ENCODE measurements at regions of chr2 and their contacts with region 1.

Region 1: GRCh38 chr2:113602869-113603466 is 24.1 kb upstream of the RABL2A start:
- DNase-seq: no peak
- CTCF ChIP-seq: no peak

Region 2: DNA sequence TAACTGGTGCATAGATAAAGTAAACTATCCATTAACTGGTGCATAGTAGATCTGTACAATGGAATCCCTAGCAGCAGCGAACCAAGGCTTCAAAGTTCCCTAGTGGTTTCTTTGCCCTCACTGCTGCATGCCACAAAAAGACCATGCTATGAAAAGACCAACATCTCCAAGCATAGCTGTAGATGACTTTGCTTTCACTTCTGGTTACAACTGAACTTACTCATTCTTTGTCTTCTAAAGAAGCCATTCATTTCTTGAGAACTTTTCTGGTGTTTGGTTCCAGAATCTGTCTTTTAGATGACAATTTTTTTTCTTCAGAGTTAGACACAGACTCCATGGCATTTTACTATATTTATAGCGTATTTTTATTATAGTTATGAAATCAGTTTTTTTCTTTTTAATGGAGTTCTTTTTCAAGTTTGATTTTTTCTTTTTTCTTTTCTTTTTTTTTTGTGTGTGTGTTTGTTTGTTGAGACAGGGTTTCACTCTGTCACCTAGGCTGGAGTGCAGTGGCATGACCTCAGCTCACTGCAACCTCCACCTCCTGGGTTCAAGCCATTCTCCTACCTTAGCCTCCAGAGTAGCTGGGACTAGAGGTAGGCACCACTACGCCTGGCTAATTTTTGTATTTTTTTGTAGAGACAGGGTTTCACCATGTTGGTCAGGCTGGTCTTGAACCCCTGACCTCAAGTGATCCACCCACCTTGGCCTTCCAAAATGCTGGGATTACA is 89.9 kb after region 1 on chr2:
- CTCF ChIA-PET with region 1: interaction called, 21 read pairs
- POLR2A ChIA-PET with region 1: no interaction called
- DNase-seq: peak; percentile 57
- CTCF ChIP-seq: no peak

Measured in GM10248 (cell line).